Activated CD4-positive, alpha-beta T cell treated with anti-CD3 and anti-CD28 coated beads for 36 hours (primary cell): ENCODE measurements at regions of chr1 and their contacts with region 1.

Region 1: DNA sequence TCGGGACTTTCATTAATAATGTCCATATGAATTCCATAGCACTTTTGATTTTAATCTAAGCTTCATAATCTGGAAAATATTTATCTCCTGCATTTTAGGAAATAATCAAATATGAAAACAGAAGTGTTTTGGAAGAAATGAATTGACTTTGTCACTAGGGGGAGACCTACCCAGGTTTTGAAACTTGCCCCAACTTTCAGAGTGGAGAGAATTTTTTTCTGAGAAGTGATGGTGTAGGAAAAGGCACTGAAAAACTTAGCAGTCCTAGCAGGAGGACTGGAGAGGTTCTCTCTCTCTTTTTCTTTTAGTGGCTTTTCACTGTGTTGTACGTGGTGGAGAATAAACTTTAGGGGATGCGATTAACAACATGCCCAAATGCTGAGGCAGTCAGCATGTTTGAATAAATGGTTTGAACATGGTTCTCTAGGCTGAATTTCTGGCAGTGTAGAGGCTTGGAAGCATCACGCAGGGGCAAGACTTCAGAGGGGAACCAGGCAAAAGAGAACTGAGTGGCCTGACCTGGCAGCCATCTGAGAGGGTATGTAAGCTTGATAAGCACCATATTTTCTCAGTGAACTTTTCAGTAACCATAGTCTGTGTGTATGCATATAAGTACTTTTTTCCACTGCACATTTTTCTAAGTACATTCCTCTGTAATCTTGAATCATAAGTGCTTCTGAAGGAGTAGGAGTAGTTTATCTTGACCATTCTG is 68.3 kb upstream of the NEK7 start:
- DNase-seq: peak; percentile 16
- ATAC-seq: peak; percentile 65
- H3K4me3 Mint-ChIP-seq: no peak overlapping the region
- H3K27ac Mint-ChIP-seq: no peak overlapping the region
- H3K4me1 Mint-ChIP-seq: peaks cover 8% of the 10 kb centered on the region
- H3K27me3 Mint-ChIP-seq: peaks cover 2% of the 10 kb centered on the region

Region 2: DNA sequence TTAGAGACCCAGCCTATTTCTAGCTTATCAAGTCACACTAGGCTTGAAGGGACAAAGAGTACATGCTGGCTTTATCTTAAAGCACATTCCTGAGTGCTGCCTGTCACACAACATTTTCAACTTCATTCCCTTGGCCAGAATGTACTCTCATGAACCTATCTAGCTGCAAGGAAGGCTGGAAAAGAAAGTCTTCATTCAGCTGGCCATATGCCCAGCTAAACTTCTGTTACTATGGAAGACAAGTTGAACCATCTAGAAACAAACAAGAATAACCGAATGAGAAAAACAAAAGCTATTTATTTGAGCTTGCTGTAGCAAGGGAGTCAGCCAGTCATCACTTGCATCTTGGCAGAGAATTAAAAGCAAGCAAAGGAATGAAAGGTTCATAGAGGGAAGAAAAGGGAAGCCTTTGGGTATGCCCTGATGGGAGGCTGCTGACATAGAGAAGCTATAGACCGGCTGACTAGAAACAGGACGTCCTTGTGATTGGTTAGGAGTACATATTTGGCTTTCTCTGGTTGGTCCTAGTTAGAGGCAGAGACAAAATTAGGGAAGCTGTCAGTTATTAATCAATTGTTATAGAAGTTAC is 176.7 kb after region 1 on chr1:
- CTCF ChIA-PET with region 1: interaction called, 3 read pairs
- POLR2A ChIA-PET with region 1: no interaction called
- intact Hi-C with region 1: loop called (anchors 5 to 10 kb)
- DNase-seq: no peak
- ATAC-seq: no peak
- H3K4me3 Mint-ChIP-seq: no peak overlapping the region
- H3K27ac Mint-ChIP-seq: no peak overlapping the region
- H3K4me1 Mint-ChIP-seq: peaks cover 15% of the 10 kb centered on the region
- H3K27me3 Mint-ChIP-seq: no peaks in the 10 kb centered on the region

Region 3: DNA sequence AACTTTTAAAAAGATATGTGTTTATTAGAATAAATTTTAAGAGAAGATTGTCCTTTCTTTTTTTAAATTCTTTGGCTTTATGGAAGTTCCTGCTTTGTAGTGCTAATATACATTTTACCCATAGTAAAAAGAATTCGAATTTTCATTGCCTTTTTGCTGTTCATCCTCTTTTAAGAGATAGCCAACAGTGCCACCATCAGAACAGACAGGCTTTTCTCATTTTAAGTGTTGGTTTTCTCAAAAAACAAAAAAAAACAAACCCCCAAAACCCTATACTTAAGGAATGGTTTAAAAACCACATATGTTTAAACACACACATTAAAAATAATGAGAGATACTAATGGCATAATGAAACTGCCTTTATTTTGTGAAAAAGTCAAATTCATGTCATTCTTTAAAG is 187.1 kb after region 1 on chr1:
- CTCF ChIA-PET with region 1: interaction called, 3 read pairs
- POLR2A ChIA-PET with region 1: no interaction called
- intact Hi-C with region 1: loop called in 1 of 2 experiments (anchors 10 kb)
- DNase-seq: no peak
- ATAC-seq: no peak
- H3K4me3 Mint-ChIP-seq: no peak overlapping the region
- H3K27ac Mint-ChIP-seq: no peak overlapping the region
- H3K4me1 Mint-ChIP-seq: peaks cover 9% of the 10 kb centered on the region
- H3K27me3 Mint-ChIP-seq: no peaks in the 10 kb centered on the region

Region 4: GRCh38 chr1:198359024-198359653 is 270.6 kb after region 1 on chr1:
- CTCF ChIA-PET with region 1: interaction called, 4 read pairs
- POLR2A ChIA-PET with region 1: no interaction called
- intact Hi-C with region 1: loop called (anchors 1 kb)
- DNase-seq: no peak
- ATAC-seq: no peak
- H3K4me3 Mint-ChIP-seq: no peak overlapping the region
- H3K27ac Mint-ChIP-seq: no peak overlapping the region
- H3K4me1 Mint-ChIP-seq: peaks cover 5% of the 10 kb centered on the region
- H3K27me3 Mint-ChIP-seq: no peaks in the 10 kb centered on the region